IMR-90 (cell line): ENCODE measurements at regions of chr17 and their contacts with region 1.

Region 1: DNA sequence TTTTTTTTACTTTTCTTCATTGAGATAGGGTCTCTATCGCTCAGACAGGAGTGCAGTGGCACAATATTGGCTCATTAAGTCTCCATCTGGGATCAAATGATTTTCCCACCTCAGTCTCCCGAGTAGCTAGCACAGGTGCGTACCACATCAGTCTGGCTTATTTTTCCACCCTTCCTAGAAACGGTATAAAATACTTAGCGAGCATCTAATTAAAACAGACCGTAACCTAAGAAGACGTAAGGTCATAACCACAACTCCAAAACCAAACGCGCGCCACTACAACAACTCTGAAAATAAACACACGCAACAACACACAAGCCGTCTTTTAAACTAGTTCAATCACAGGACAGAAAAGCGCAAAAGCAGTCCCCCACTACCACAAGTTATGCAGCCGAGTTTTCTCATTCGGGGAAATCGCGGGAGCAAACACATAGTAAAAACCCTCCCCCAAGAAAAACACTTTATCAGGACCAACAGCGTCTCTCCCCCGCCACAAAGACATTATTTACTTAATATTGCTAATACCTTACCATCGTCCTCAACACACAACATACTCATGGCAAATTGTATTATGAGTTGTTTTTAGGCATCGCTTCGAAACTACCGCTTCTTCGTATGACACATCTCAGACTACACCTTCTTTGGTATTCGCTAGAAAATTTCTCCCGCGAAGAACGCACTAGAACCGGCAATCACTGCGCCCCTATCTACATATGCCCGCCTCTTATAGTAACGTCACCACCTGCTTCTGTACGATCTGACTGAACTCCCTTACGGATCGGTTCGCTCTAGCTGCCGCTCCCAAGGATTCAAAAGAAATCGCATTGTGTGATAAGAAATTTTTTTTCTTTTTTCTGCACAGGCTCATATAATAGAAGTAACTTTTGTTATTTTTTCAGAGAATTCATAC is 32.8 kb downstream of the TEX14 start:
- DNase-seq: peak; percentile 99
- ATAC-seq: peak; percentile 94
- H3K4me3 ChIP-seq: peak overlapping the region; percentile 22
- H3K27ac ChIP-seq: peak overlapping the region; percentile 82
- H3K4me1 ChIP-seq: no peaks in the 10 kb centered on the region
- H3K27me3 ChIP-seq: no peaks in the 10 kb centered on the region
- CTCF ChIP-seq: no peak
- POLR2A ChIP-seq: peak; percentile 100
- RAD21 ChIP-seq: no peak

Region 2: GRCh38 chr17:58631523-58632323 is 27.3 kb before region 1 on chr17:
- CTCF ChIA-PET with region 1: no interaction called
- POLR2A ChIA-PET with region 1: interaction called, 8 read pairs
- dilution Hi-C with region 1: no loop called
- in situ Hi-C with region 1: no loop called
- intact Hi-C with region 1: loop called (anchors 1 kb)
- DNase-seq: peak; percentile 99
- ATAC-seq: peak; percentile 94
- H3K4me3 ChIP-seq: peak overlapping the region; percentile 42; the same call in 1 of the 2 replicates
- H3K27ac ChIP-seq: peak overlapping the region; percentile 68; the same call in 1 of the 2 replicates
- H3K4me1 ChIP-seq: no peaks in the 10 kb centered on the region
- H3K27me3 ChIP-seq: no peaks in the 10 kb centered on the region
- CTCF ChIP-seq: 0 out of 2 replicates have a peak, but pooled peaks have one; percentile 22
- POLR2A ChIP-seq: peak; percentile 100
- RAD21 ChIP-seq: no peak

Region 3: DNA sequence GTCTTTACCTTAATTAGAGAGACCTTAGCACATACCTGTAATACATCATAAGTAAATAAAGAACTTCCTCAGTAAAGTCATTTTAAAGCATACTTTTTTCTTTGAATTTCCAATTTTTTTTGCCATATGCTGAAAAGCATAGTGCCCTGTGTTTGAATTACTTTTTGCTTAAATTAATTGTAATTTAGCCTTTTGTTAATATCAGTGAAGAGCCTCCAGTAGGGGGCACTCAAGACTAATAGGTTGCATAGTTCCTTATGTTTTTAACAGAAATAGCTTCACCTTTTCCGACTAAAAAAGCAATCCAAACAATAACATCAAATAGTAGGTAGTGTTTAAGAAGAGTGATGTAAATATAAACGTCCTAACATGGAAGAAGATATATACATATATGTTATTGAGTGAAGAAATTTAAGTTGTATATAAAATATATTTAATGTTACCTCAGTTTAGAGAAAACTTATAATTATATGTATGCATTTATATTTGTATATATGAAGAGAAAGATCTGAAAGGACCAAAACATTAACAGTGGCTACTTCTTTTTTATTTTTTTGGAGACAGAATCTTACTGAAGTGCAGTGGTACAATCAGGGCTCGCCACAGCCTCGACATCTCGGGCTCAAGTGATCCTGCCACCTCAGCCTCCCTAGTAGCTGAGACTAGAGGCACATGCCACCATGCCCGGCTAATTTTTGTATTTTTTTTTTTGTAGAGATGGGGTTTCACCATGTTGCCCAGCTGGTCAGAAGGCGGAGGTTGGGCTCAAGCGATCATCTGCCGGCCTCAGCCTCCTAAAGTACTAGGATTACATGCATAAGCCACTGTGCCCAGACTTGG is 52.1 kb after region 1 on chr17:
- CTCF ChIA-PET with region 1: no interaction called
- POLR2A ChIA-PET with region 1: no interaction called
- dilution Hi-C with region 1: no loop called
- in situ Hi-C with region 1: no loop called
- intact Hi-C with region 1: loop called (anchors 10 kb)
- DNase-seq: peak; percentile 69
- ATAC-seq: peak; percentile 65; the same call in 1 of the 2 replicates
- H3K4me3 ChIP-seq: no peak overlapping the region
- H3K27ac ChIP-seq: no peak overlapping the region
- H3K4me1 ChIP-seq: no peaks in the 10 kb centered on the region
- H3K27me3 ChIP-seq: no peaks in the 10 kb centered on the region
- CTCF ChIP-seq: peak; percentile 79
- POLR2A ChIP-seq: no peak
- RAD21 ChIP-seq: peak; percentile 75